GM12878 (cell line): ENCODE measurements at regions of chr20 and their contacts with region 1.

Region 1: DNA sequence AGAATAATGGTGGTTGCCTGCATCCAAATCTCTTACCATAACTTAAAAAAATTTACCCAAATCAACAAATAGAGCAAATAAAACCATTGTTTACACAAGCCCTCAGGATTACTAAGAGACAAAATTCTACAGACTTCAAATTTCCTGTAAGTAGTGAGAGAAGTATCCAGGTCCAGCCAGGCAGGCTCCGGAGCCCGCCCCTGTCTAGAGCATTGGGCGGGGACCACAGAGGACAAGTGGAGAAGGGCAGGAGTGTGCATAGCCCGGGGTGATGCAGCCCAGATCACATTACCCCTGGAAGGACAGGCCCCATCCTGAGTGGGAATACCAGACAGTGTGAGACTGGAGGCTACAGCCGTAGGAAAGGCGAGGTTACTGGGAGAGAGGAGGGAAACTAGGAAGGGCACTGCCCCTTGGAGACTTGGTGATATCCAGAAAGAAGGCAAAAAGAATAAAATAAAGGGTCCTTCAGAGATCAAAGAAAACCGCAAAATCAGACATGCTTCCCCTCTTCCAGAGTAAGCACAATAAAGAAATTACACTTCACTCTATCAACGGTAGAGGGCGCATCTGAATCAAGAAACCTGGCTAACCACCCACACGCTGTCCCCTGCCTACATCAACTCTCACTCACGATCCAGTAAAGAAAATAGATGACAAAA is 26.6 kb downstream of the RIN2 start:
- DNase-seq: peak; percentile 9
- ATAC-seq: peak; percentile 88
- H3K4me3 ChIP-seq: no peak overlapping the region
- H3K27ac ChIP-seq: no peak overlapping the region
- H3K4me1 ChIP-seq: peaks cover 12% of the 10 kb centered on the region; the same call in 1 of the 2 replicates
- H3K27me3 ChIP-seq: no peaks in the 10 kb centered on the region
- CTCF ChIP-seq: peak; percentile 61 to 71 (median 64)
- EP300 ChIP-seq: no peak
- POLR2A ChIP-seq: no peak
- RAD21 ChIP-seq: peak; percentile 85

Region 2: GRCh38 chr20:19540392-19540791 is 244.2 kb before region 1 on chr20:
- CTCF ChIA-PET with region 1: no interaction called
- POLR2A ChIA-PET with region 1: no interaction called
- RAD21 ChIA-PET with region 1: no interaction called
- SMC1A ChIA-PET with region 1: no interaction called
- in situ Hi-C with region 1: no loop called
- intact Hi-C with region 1: no loop called
- DNase-seq: no peak
- ATAC-seq: peak; percentile 38; the same call in 1 of the 3 replicates
- H3K4me3 ChIP-seq: no peak overlapping the region
- H3K27ac ChIP-seq: no peak overlapping the region
- H3K4me1 ChIP-seq: no peaks in the 10 kb centered on the region
- H3K27me3 ChIP-seq: no peaks in the 10 kb centered on the region; a peak in 1 of 4 replicates
- CTCF ChIP-seq: no peak
- EP300 ChIP-seq: no peak
- POLR2A ChIP-seq: no peak
- RAD21 ChIP-seq: no peak

Region 3: DNA sequence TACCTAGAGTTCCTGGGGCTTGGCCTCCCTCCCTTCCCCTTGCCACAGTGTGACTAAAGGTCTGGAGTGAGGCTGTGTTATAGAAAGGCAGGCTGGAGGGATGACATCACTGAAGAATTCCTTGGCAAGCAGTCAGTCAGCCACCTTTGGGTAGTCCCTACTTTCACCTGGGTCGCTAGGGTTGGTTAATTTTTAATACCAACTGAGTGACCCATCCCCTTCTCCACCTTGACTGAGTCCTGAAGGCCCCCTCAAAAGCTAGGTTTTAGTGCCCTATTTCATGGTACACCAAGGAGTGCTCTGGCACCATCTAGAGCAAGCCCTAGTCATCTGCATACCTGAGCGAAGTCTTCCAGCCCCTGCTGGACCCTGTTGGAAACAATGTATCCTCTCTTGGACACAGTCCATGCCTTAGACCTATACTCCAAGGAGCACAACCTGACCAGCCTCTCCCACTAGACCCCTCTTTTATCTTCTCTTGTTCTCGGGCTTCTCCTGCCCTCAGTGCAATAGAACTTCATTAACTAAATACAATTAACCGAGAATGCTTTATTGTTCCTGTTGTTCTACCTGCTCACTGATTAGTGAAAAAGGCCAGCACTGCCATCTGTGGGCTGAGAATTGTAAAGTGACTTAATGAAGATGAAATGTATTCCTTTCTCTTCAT is 18.0 kb after region 1 on chr20:
- CTCF ChIA-PET with region 1: interaction called, 16 read pairs
- POLR2A ChIA-PET with region 1: no interaction called
- RAD21 ChIA-PET with region 1: no interaction called
- SMC1A ChIA-PET with region 1: interaction called, 8 read pairs
- in situ Hi-C with region 1: no loop called
- intact Hi-C with region 1: no loop called
- DNase-seq: no peak
- ATAC-seq: peak; percentile 82
- H3K4me3 ChIP-seq: no peak overlapping the region
- H3K27ac ChIP-seq: no peak overlapping the region
- H3K4me1 ChIP-seq: no peaks in the 10 kb centered on the region
- H3K27me3 ChIP-seq: no peaks in the 10 kb centered on the region
- CTCF ChIP-seq: peak in 2 of 3 experiments; percentile 12 to 29; a peak in 3 of 6 replicates
- EP300 ChIP-seq: no peak
- POLR2A ChIP-seq: no peak
- RAD21 ChIP-seq: 0 out of 2 replicates have a peak, but pooled peaks have one; percentile 1

Region 4: GRCh38 chr20:19815553-19815991 is 30.9 kb after region 1 on chr20:
- CTCF ChIA-PET with region 1: interaction called, 4 read pairs
- POLR2A ChIA-PET with region 1: interaction called, 3 read pairs
- RAD21 ChIA-PET with region 1: interaction called, 4 read pairs
- SMC1A ChIA-PET with region 1: interaction called, 21 read pairs
- in situ Hi-C with region 1: no loop called
- intact Hi-C with region 1: loop called (anchors 5 kb)
- DNase-seq: no peak
- ATAC-seq: peak; percentile 87
- H3K4me3 ChIP-seq: no peak overlapping the region
- H3K27ac ChIP-seq: no peak overlapping the region
- H3K4me1 ChIP-seq: no peaks in the 10 kb centered on the region
- H3K27me3 ChIP-seq: peaks cover 0 to 2% of the 10 kb centered on the region in 2 experiments; a peak in 1 of 4 replicates
- CTCF ChIP-seq: no peak
- EP300 ChIP-seq: no peak
- POLR2A ChIP-seq: no peak
- RAD21 ChIP-seq: no peak

Region 5: DNA sequence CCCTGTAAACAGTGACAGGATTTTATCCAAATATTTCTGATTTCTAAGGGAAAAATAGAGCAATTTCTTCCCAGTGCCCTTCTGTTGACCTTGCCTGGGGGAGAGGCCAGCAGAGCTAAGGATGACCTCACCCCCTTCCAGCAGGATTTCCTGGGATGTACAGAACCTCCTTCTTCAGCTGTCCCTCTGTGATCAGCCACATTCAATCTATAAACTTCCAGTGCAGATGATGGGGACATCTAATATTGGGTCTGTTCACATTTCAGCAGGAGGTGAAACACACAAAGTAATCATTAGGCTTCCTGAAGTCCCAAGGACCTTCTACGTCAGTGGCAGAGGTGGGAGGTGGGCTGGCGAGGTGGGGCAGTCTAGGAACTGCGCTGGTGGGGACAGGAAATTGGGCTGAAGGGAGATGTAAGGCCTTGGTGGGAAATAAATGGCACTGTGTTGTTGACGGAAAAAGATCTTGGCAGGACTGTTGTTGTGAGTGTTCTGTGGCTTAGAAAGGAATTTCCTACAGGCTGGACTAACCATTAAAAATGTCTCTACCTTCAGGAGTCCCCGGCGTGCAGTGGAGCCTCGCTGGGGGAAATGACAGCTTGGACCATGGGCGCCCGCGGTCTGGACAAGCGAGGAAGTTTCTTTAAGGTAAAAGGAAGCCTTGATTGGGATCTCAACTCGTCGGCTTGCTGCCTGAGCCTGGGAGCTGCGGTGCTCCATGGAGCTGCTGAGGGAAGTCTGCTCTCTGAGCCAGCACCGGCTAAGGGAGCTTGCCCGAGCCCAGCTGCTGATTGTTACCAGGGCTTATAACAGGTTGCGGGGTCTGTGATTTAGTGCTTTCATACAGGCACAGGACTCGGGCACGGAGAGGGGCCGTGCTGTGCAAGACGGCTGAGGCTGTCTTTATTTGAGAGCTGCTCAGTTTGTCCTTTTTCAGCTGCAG is 104.6 kb after region 1 on chr20:
- CTCF ChIA-PET with region 1: interaction called, 8 read pairs
- POLR2A ChIA-PET with region 1: interaction called, 3 read pairs
- RAD21 ChIA-PET with region 1: interaction called, 3 read pairs
- SMC1A ChIA-PET with region 1: interaction called, 5 read pairs
- in situ Hi-C with region 1: no loop called
- intact Hi-C with region 1: loop called (anchors 10 kb)
- DNase-seq: no peak
- ATAC-seq: no peak
- H3K4me3 ChIP-seq: no peak overlapping the region
- H3K27ac ChIP-seq: no peak overlapping the region
- H3K4me1 ChIP-seq: no peaks in the 10 kb centered on the region
- H3K27me3 ChIP-seq: peaks cover 0 to 11% of the 10 kb centered on the region in 2 experiments; a peak in 3 of 4 replicates
- CTCF ChIP-seq: no peak
- EP300 ChIP-seq: no peak
- POLR2A ChIP-seq: no peak
- RAD21 ChIP-seq: no peak

Region 6: GRCh38 chr20:19903168-19903811 is 118.6 kb after region 1 on chr20:
- CTCF ChIA-PET with region 1: interaction called, 7 read pairs
- POLR2A ChIA-PET with region 1: no interaction called
- RAD21 ChIA-PET with region 1: interaction called, 5 read pairs
- SMC1A ChIA-PET with region 1: interaction called, 7 read pairs
- in situ Hi-C with region 1: no loop called
- intact Hi-C with region 1: loop called (anchors 5 kb)
- DNase-seq: no peak
- ATAC-seq: peak; percentile 94
- H3K4me3 ChIP-seq: no peak overlapping the region
- H3K27ac ChIP-seq: no peak overlapping the region
- H3K4me1 ChIP-seq: no peaks in the 10 kb centered on the region
- H3K27me3 ChIP-seq: no peaks in the 10 kb centered on the region
- CTCF ChIP-seq: peak; percentile 42 to 85 (median 59); a peak in 5 of 6 replicates
- EP300 ChIP-seq: no peak; a peak in 1 of 4 replicates
- POLR2A ChIP-seq: no peak
- RAD21 ChIP-seq: peak; percentile 84

Region 7: GRCh38 chr20:20003031-20003954 is 218.7 kb after region 1 on chr20:
- CTCF ChIA-PET with region 1: interaction called, 8 read pairs
- POLR2A ChIA-PET with region 1: interaction called, 3 read pairs
- RAD21 ChIA-PET with region 1: interaction called, 3 read pairs
- SMC1A ChIA-PET with region 1: interaction called, 4 read pairs
- in situ Hi-C with region 1: loop called (anchors 5 kb)
- intact Hi-C with region 1: loop called (anchors 2 kb)
- DNase-seq: no peak
- ATAC-seq: peak; percentile 69
- H3K4me3 ChIP-seq: no peak overlapping the region; the same call in 1 of the 2 replicates
- H3K27ac ChIP-seq: no peak overlapping the region
- H3K4me1 ChIP-seq: 0 out of 2 replicates have a peak, but pooled peaks cover 5% of the 10 kb centered on the region
- H3K27me3 ChIP-seq: peaks cover 2 to 8% of the 10 kb centered on the region in 2 experiments; a peak in 3 of 4 replicates
- CTCF ChIP-seq: no peak
- EP300 ChIP-seq: no peak
- POLR2A ChIP-seq: no peak
- RAD21 ChIP-seq: no peak